HepG2 (cell line): ENCODE measurements at regions of chr22 and their contacts with region 1.

Region 1: DNA sequence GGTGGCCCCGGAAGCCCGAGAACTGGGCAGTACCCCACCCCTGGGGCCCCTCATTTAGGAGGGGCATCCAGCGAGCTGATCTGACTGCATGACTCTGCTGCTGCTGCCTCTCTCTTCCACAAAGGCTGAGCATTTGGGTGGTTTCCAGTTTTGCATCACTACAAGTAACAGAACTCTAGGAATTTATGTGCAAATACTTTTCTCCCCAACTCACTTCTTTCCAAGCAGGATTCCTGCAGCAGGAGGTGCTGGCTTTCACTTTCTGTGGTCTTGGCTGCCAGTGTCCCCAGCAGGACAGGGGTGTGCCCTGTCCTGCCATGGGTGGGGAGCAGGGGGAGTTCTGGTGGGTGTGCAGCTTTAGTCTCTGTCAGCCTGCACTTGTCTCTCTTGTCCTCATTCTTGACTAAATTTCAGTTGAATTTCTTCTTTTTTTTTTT is 21.2 kb downstream of the UPB1 start:
- DNase-seq: peak; percentile 62
- ATAC-seq: peak; percentile 20
- H3K4me3 ChIP-seq: no peak overlapping the region
- H3K27ac ChIP-seq: peak overlapping the region; percentile 39
- H3K4me1 ChIP-seq: peaks cover 98% of the 10 kb centered on the region
- H3K27me3 ChIP-seq: no peaks in the 10 kb centered on the region
- CTCF ChIP-seq: 0 out of 2 replicates have a peak, but pooled peaks have one; percentile 8
- EP300 ChIP-seq: no peak
- POLR2A ChIP-seq: no peak
- RAD21 ChIP-seq: no peak

Region 2: DNA sequence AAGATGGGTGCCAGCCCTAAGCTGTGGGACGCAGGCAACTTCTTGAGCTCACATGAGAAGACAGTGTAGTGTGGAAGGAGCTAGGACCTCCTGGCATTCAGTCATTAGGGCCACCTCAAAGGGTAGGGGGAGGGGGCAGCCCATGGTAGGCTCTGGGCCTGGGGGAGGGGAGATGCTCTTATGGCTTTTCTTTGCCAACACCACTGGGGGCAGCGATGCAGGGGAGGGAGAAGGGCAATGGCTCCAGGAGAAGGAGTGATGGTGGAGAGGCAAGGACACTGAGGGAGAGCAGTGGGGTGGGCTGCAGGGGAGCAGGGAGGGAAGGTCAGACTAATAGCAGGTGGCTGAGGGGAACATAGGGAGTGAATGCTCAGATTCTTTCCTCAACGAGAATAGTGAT is 398.4 kb before region 1 on chr22:
- CTCF ChIA-PET with region 1: no interaction called
- POLR2A ChIA-PET with region 1: no interaction called
- in situ Hi-C with region 1: no loop called
- intact Hi-C with region 1: no loop called
- DNase-seq: no peak
- ATAC-seq: peak; percentile 34; the same call in 2 of the 3 replicates
- H3K4me3 ChIP-seq: no peak overlapping the region
- H3K27ac ChIP-seq: no peak overlapping the region
- H3K4me1 ChIP-seq: no peaks in the 10 kb centered on the region
- H3K27me3 ChIP-seq: no peaks in the 10 kb centered on the region
- CTCF ChIP-seq: no peak; the same call in 1 of the 2 replicates
- EP300 ChIP-seq: no peak
- POLR2A ChIP-seq: no peak
- RAD21 ChIP-seq: no peak

Region 3: GRCh38 chr22:24325105-24325757 is 191.1 kb before region 1 on chr22:
- CTCF ChIA-PET with region 1: no interaction called
- POLR2A ChIA-PET with region 1: no interaction called
- in situ Hi-C with region 1: loop called (anchors 10 kb)
- intact Hi-C with region 1: no loop called
- DNase-seq: peak; percentile 49
- ATAC-seq: no peak
- H3K4me3 ChIP-seq: no peak overlapping the region
- H3K27ac ChIP-seq: no peak overlapping the region
- H3K4me1 ChIP-seq: peaks cover 26% of the 10 kb centered on the region
- H3K27me3 ChIP-seq: no peaks in the 10 kb centered on the region
- CTCF ChIP-seq: peak; percentile 68
- EP300 ChIP-seq: no peak
- POLR2A ChIP-seq: no peak
- RAD21 ChIP-seq: no peak

Region 4: GRCh38 chr22:24433813-24434470 is 82.4 kb before region 1 on chr22:
- CTCF ChIA-PET with region 1: no interaction called
- POLR2A ChIA-PET with region 1: no interaction called
- in situ Hi-C with region 1: no loop called
- intact Hi-C with region 1: no loop called
- DNase-seq: no peak
- ATAC-seq: no peak
- H3K4me3 ChIP-seq: no peak overlapping the region
- H3K27ac ChIP-seq: no peak overlapping the region
- H3K4me1 ChIP-seq: peaks cover 24% of the 10 kb centered on the region
- H3K27me3 ChIP-seq: no peaks in the 10 kb centered on the region
- CTCF ChIP-seq: no peak
- EP300 ChIP-seq: no peak
- POLR2A ChIP-seq: no peak
- RAD21 ChIP-seq: no peak